ENCODE measurements at regions of chr2 and their contacts with region 1.

Region 1: GRCh38 chr2:98649135-98649991 is 41.0 kb downstream of the UNC50 start:
- DNase-seq: peak; percentile 79 to 85 (median 81)
- H3K4me3 ChIP-seq: no peak overlapping the region
- H3K4me3 Mint-ChIP-seq: peak overlapping the region in 5 of 8 donors; percentile 10 to 73 (median 33)
- H3K27ac ChIP-seq: peak overlapping the region; percentile 10
- H3K27ac Mint-ChIP-seq: peak overlapping the region; percentile 66 to 89 (median 84)
- H3K4me1 ChIP-seq: peaks cover 52% of the 10 kb centered on the region
- H3K4me1 Mint-ChIP-seq: peaks cover 45 to 60% (median 54%) of the 10 kb centered on the region in 4 donors
- H3K27me3 ChIP-seq: no peaks in the 10 kb centered on the region
- H3K27me3 Mint-ChIP-seq: no peaks in the 10 kb centered on the region

Region 2: DNA sequence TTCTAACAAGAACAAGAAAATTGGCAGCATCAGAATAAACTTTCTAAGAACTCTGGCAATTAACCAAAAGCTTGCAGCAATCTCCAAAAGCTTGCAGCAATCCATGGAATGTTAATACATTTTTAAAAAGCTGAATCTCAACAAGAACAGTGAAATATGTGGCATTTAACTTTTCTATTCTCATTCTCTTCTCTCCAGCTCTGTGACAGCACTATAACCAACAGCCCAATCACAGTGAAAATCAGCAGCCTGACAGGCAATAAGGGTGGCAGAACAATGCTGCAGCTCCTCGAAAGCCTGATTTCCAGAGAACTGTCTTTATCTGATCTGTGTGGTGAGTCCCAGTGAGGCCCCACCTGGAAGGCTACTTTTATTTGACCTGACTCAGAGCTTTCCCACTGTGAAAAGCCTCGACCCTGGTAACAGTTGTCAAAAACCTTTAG is 713.6 kb before region 1 on chr2:
- CTCF ChIA-PET with region 1: no interaction called
- POLR2A ChIA-PET with region 1: no interaction called
- intact Hi-C with region 1: no loop called
- DNase-seq: no peak
- H3K4me3 ChIP-seq: no peak overlapping the region
- H3K4me3 Mint-ChIP-seq: peak overlapping the region in 3 of 8 donors; percentile 26 to 43 (median 27)
- H3K27ac ChIP-seq: no peak overlapping the region
- H3K27ac Mint-ChIP-seq: peak overlapping the region in 1 of 7 donors; percentile 40
- H3K4me1 ChIP-seq: peaks cover 30% of the 10 kb centered on the region
- H3K4me1 Mint-ChIP-seq: peaks cover 56 to 87% (median 67%) of the 10 kb centered on the region in 4 donors
- H3K27me3 ChIP-seq: no peaks in the 10 kb centered on the region
- H3K27me3 Mint-ChIP-seq: no peaks in the 10 kb centered on the region

Region 3: DNA sequence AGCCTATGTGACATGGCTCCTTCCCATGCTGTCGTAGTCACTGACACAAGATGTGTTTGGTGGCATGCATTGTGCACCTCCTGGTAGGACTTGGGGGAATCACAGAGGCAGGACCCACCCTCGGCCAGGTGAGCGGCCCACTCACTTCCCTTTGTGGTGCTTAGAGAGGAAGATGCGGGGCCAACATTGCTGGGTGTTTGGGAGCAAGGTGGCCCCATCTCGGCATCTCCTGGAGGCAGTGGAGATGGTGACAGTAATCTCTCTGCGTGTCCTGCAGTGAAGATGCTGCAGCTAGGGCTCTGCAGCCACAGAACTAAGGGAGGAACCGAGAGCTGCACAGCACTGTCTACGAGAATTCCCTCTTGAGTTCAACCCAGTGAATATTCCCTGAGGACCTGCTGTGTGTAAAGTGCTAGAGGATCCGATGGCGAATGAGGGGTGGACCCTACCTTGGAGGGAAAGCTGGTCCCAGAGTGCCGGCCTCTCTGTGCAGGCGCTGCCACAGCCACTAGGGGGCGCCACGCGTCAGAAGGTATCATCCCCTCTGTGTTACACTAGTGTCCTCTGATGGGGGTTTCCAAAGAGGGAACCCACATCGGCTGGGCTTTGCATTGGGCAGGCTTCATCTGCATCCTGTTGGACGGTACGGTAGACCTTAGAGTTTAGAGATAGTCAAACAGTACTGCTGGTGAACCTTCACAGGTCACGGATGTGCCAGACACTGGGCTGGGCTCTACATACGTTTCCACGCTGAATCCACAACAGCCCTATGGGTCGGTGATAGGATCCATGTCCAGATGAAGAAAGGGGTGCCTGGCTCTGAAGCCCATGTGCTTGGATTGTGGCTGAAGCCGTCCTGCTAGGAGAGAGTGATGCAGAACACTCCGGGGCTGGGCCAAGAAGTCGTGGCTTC is 80.2 kb before region 1 on chr2:
- CTCF ChIA-PET with region 1: interaction called, 6 read pairs
- POLR2A ChIA-PET with region 1: no interaction called
- intact Hi-C with region 1: loop called (anchors 10 kb)
- DNase-seq: peak; percentile 47 to 60 (median 53)
- H3K4me3 ChIP-seq: no peak overlapping the region
- H3K4me3 Mint-ChIP-seq: peak overlapping the region in 1 of 8 donors; percentile 18
- H3K27ac ChIP-seq: peak overlapping the region; percentile 7
- H3K27ac Mint-ChIP-seq: peak overlapping the region; percentile 3 to 75 (median 37)
- H3K4me1 ChIP-seq: no peaks in the 10 kb centered on the region
- H3K4me1 Mint-ChIP-seq: peaks cover 0 to 9% (median 4%) of the 10 kb centered on the region in 4 donors
- H3K27me3 ChIP-seq: no peaks in the 10 kb centered on the region
- H3K27me3 Mint-ChIP-seq: no peaks in the 10 kb centered on the region

Region 4: DNA sequence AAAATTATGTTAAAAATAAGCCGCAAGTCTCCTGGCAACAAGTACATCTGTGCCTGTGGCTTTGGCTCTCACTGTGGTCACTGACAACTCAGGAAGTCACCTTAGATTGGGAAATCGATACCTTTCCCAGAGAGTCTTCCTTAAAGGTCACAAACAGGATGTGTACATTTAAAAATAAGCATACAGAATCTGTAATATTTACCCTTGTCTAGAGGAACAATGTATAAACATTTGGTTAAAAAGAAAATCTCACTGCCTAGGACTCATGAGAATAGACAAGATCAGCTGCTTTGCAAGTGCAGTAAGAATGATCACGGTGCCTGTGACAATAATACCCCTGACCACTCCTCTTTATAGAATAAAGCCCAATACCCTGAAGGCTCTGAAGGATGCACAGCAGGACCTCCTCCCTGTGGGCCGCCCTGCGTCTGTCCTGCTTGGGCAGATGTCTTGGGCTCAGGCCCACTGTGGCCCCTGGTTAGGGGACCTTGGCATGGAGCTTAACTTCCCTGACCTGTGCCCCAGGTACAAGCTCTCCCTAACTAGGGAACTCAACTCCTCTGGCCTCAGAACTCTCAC is 179.5 kb after region 1 on chr2:
- CTCF ChIA-PET with region 1: interaction called, 22 read pairs
- POLR2A ChIA-PET with region 1: interaction called, 5 read pairs
- intact Hi-C with region 1: no loop called
- DNase-seq: peak; percentile 40 to 61 (median 49)
- H3K4me3 ChIP-seq: peak overlapping the region; percentile 15 to 19
- H3K4me3 Mint-ChIP-seq: peak overlapping the region; percentile 49 to 75 (median 70)
- H3K27ac ChIP-seq: peak overlapping the region; percentile 44
- H3K27ac Mint-ChIP-seq: peak overlapping the region; percentile 76 to 94 (median 93)
- H3K4me1 ChIP-seq: peaks cover 61% of the 10 kb centered on the region
- H3K4me1 Mint-ChIP-seq: peaks cover 54 to 97% (median 78%) of the 10 kb centered on the region in 4 donors
- H3K27me3 ChIP-seq: no peaks in the 10 kb centered on the region
- H3K27me3 Mint-ChIP-seq: no peaks in the 10 kb centered on the region

Measured in CD4-positive, alpha-beta memory T cell (primary cell).